ENCODE measurements at regions of chr2 and their contacts with region 1.

Region 1: GRCh38 chr2:10993001-10993481 is 81.3 kb downstream of the KCNF1 start:
- DNase-seq: no peak
- H3K4me3 ChIP-seq: no peak overlapping the region
- H3K27ac ChIP-seq: no peak overlapping the region
- H3K4me1 ChIP-seq: peaks cover 14% of the 10 kb centered on the region
- H3K27me3 ChIP-seq: peaks cover 2% of the 10 kb centered on the region
- CTCF ChIP-seq: no peak

Region 2: GRCh38 chr2:10919771-10920621 is 73.0 kb before region 1 on chr2:
- CTCF ChIA-PET with region 1: no interaction called
- dilution Hi-C with region 1: loop called (anchors 5 kb)
- in situ Hi-C with region 1: no loop called
- intact Hi-C with region 1: no loop called
- DNase-seq: no peak
- H3K4me3 ChIP-seq: no peak overlapping the region
- H3K27ac ChIP-seq: no peak overlapping the region
- H3K4me1 ChIP-seq: no peaks in the 10 kb centered on the region
- H3K27me3 ChIP-seq: peaks cover 4% of the 10 kb centered on the region
- CTCF ChIP-seq: no peak

Region 3: DNA sequence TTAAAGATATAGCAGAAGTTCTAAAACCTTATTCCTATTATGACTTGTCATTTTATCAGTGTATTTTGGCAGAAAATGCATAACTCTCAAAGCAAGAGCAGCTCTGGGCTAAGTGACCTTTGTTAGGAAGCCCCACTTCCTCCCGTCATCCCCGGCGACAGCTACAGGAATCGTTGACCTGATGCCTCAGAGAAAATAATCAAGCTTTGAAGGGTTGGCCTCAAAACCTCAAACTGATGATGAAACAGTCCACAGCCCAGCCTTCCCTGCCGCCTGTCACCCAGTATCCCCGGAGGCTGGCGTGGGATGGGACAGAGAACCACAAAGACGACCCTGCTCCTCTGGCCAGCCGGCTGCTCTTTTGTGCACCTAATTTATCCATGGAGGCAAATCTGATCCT is 16.0 kb before region 1 on chr2:
- CTCF ChIA-PET with region 1: no interaction called
- dilution Hi-C with region 1: no loop called
- in situ Hi-C with region 1: no loop called
- intact Hi-C with region 1: no loop called
- DNase-seq: no peak
- H3K4me3 ChIP-seq: no peak overlapping the region
- H3K27ac ChIP-seq: no peak overlapping the region
- H3K4me1 ChIP-seq: no peaks in the 10 kb centered on the region
- H3K27me3 ChIP-seq: peaks cover 6% of the 10 kb centered on the region
- CTCF ChIP-seq: no peak